ENCODE measurements at regions of chr2 and their contacts with region 1.

Region 1: DNA sequence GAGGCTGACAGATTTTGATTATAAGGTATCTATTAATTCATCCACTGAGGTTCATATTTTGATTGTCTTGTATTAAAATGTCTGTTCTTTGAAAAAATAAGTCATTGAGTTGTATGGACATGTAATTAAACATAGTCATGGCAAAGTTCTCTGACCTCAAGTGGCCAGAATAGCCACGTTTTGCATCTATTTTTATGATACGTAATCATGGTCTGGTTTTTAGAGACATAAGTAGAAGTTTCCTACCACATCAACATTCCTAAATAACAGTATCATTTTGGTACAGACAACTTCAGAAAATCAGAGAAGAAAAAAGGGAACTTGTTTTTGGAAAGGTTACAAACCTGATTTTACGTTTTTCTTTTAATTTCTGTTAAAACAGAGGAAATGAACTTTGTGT is 47.6 kb downstream of the COL5A2 start:
- DNase-seq: no peak
- H3K4me3 ChIP-seq: no peak overlapping the region
- H3K27ac ChIP-seq: peak overlapping the region in 1 of 2 experiments; percentile 100; a peak in 2 of 4 replicates
- H3K4me1 ChIP-seq: peaks cover 0 to 26% of the 10 kb centered on the region in 2 experiments; a peak in 2 of 4 replicates
- H3K27me3 ChIP-seq: no peaks in the 10 kb centered on the region
- CTCF ChIP-seq: no peak
- EP300 ChIP-seq: no peak
- RAD21 ChIP-seq: no peak

Region 2: GRCh38 chr2:189142893-189143759 is 11.1 kb after region 1 on chr2:
- CTCF ChIA-PET with region 1: interaction called, 11 read pairs
- POLR2A ChIA-PET with region 1: no interaction called
- DNase-seq: no peak
- H3K4me3 ChIP-seq: no peak overlapping the region; a peak in 1 of 4 replicates
- H3K27ac ChIP-seq: peak overlapping the region; percentile 71 to 94; a peak in 3 of 4 replicates
- H3K4me1 ChIP-seq: peaks cover 0 to 46% of the 10 kb centered on the region in 2 experiments; a peak in 2 of 4 replicates
- H3K27me3 ChIP-seq: no peaks in the 10 kb centered on the region
- CTCF ChIP-seq: peak; percentile 70
- EP300 ChIP-seq: no peak
- RAD21 ChIP-seq: peak; percentile 47

Measured in SK-N-SH (cell line).